SK-N-SH (cell line): ENCODE measurements at regions of chr14 and their contacts with region 1.

Region 1: DNA sequence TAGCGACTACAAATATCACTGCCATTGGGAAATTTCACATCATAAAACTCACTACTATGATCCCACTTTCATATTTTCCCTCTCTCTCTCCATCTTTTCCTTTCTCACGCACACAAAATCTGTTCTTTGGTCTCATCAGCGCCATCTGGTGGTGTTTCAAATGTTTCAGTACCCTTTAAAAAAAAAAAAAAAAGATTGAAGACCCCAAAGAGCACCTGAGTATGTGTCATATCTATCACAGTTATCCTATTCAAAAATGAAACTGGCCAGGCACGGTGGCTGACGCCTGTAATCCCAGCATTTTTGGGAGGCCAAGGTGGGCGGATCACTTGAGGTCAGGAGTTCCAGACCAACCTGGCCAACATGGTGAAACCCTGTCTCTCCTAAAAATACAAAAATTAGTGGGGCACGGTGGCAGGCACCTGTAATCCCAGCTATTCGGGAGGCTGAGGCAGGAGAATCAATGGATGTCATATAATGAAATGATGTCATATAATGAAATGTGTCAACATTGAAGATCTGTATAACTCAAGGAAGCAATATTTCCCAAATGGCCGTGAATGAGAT is 72.4 kb downstream of the TTC9 start:
- DNase-seq: peak; percentile 50
- H3K4me3 ChIP-seq: no peak overlapping the region
- H3K27ac ChIP-seq: no peak overlapping the region
- H3K4me1 ChIP-seq: peaks cover 4 to 9% of the 10 kb centered on the region in 2 experiments; a peak in 3 of 4 replicates
- H3K27me3 ChIP-seq: no peaks in the 10 kb centered on the region
- CTCF ChIP-seq: peak; percentile 84
- EP300 ChIP-seq: no peak
- RAD21 ChIP-seq: peak; percentile 68

Region 2: GRCh38 chr14:70514168-70515069 is 199.7 kb before region 1 on chr14:
- CTCF ChIA-PET with region 1: no interaction called
- POLR2A ChIA-PET with region 1: no interaction called
- DNase-seq: no peak
- H3K4me3 ChIP-seq: no peak overlapping the region
- H3K27ac ChIP-seq: no peak overlapping the region
- H3K4me1 ChIP-seq: no peaks in the 10 kb centered on the region
- H3K27me3 ChIP-seq: no peaks in the 10 kb centered on the region
- CTCF ChIP-seq: no peak
- EP300 ChIP-seq: no peak
- RAD21 ChIP-seq: no peak

Region 3: GRCh38 chr14:70600382-70601157 is 113.6 kb before region 1 on chr14 and contains the start of gene MED6:
- CTCF ChIA-PET with region 1: interaction called, 15 read pairs
- POLR2A ChIA-PET with region 1: no interaction called
- DNase-seq: peak; percentile 96
- H3K4me3 ChIP-seq: peak within 1 kb of the TSS; percentile 95 to 97
- H3K27ac ChIP-seq: peak within 1 kb of the TSS; percentile 65 to 81
- H3K4me1 ChIP-seq: peaks cover 0 to 14% of the 10 kb centered on the region in 2 experiments; a peak in 2 of 4 replicates
- H3K27me3 ChIP-seq: no peaks in the 10 kb centered on the region
- CTCF ChIP-seq: no peak
- EP300 ChIP-seq: no peak
- RAD21 ChIP-seq: no peak
- polyA plus RNA-seq, gene MED6: 24.2 and 31.1 TPM in 2 replicates

Region 4: DNA sequence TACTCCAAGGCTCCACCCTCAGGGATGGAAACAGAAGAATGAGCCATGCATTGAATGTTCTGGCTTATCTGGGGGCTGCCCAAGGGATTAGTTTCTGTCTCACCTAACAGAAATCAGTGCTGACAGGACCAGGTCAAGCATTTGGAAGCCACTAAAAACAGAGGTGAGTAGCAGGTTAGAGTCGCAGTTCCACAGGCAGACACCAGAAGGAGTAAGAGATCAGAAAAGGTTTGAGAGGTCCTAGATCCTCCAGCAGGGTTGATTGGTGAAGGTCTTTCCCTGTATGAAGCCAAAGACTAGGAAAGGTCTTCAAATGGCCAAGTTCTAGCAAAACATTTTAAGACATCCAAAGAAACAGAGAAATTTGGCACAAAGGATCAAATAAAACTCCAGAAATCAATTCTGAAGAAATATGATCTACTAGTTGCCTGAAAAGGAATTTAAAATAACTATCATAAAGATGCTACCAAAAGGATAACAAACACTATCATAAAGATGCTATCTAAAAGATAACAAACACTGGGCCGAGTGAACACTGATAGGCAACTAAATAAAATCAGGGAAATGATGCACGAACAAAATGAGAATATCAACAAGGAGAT is 91.9 kb before region 1 on chr14:
- CTCF ChIA-PET with region 1: interaction called, 39 read pairs
- POLR2A ChIA-PET with region 1: no interaction called
- DNase-seq: peak; percentile 56
- H3K4me3 ChIP-seq: no peak overlapping the region
- H3K27ac ChIP-seq: no peak overlapping the region
- H3K4me1 ChIP-seq: no peaks in the 10 kb centered on the region
- H3K27me3 ChIP-seq: no peaks in the 10 kb centered on the region
- CTCF ChIP-seq: peak; percentile 62
- EP300 ChIP-seq: no peak
- RAD21 ChIP-seq: peak; percentile 84

Region 5: DNA sequence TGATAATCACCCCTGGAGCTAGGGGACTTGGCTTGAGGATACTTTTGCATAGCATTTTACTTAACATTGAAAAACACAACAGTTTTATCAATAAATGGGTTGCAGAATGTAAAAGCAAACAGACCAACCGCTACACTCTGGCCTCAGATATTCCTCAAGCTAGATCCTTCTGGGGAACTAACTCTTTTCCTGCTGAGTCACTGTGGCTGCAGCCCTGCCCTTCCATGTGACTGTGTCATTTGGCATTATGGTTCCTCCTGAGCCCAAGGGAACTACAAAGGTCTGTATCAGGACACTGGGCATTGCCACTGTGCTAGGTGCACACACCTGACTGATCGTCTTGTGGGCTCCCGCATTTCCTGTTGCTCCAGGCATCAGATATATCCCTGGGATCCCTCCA is 15.8 kb before region 1 on chr14:
- CTCF ChIA-PET with region 1: interaction called, 16 read pairs
- POLR2A ChIA-PET with region 1: no interaction called
- DNase-seq: no peak
- H3K4me3 ChIP-seq: no peak overlapping the region
- H3K27ac ChIP-seq: no peak overlapping the region
- H3K4me1 ChIP-seq: peaks cover 0 to 10% of the 10 kb centered on the region in 2 experiments; a peak in 2 of 4 replicates
- H3K27me3 ChIP-seq: peaks cover 4% of the 10 kb centered on the region; the same call in 1 of the 2 replicates
- CTCF ChIP-seq: no peak
- EP300 ChIP-seq: no peak
- RAD21 ChIP-seq: no peak